ENCODE measurements at regions of chr12 and their contacts with region 1.

Region 1: GRCh38 chr12:47032644-47033043 is 46.8 kb upstream of the PCED1B start:
- DNase-seq: peak in 3 of 7 donors; percentile 20 to 41 (median 20)
- H3K4me3 ChIP-seq: no peak overlapping the region
- H3K27ac ChIP-seq: no peak overlapping the region
- H3K4me1 ChIP-seq: peaks cover 4 to 8% of the 10 kb centered on the region in 2 donors
- H3K27me3 ChIP-seq: no peaks in the 10 kb centered on the region
- CTCF ChIP-seq: peak; percentile 31 to 84 (median 69)
- POLR2A ChIP-seq: no peak

Region 2: GRCh38 chr12:46915082-46915481 is 117.6 kb before region 1 on chr12:
- intact Hi-C with region 1: no loop called
- DNase-seq: peak in 6 of 7 donors; percentile 28 to 71 (median 44)
- H3K4me3 ChIP-seq: no peak overlapping the region
- H3K27ac ChIP-seq: no peak overlapping the region
- H3K4me1 ChIP-seq: no peaks in the 10 kb centered on the region
- H3K27me3 ChIP-seq: no peaks in the 10 kb centered on the region
- CTCF ChIP-seq: no peak
- POLR2A ChIP-seq: no peak

Region 3: DNA sequence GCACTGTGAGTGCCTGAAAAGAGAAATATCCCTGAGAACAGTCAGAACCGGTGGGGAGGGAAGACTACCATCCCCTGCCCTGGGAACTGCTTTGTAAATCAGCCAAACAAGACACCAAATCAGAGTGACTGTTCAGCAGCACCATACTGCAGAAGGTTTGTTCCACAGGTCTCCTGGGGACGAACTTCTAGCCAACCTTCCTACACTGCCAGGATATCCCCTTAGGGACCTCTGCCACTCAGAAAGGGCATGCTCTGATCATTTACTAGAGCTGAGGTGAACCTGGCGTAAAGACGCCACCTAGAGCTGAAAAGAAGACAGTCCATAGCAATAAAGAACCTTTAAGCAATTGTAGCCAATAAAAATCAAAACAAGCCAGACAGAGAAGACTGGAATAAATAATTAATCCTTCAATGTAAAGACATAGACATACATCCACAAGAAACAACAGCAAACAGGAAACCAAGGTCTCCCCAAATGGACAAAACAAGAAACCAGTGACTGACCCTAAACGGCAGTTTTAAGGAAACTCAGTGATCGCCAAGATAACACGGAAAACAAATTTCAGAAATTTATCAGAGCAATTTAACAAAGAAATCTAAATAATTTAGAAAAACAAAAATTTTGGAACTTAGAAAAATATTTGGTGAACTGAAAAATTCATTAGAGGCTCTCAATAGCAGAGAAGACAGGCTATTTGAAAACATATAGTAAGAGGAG is 275.2 kb after region 1 on chr12:
- intact Hi-C with region 1: loop called (anchors 5 kb)
- DNase-seq: peak; percentile 31 to 74 (median 47)
- H3K4me3 ChIP-seq: no peak overlapping the region
- H3K27ac ChIP-seq: no peak overlapping the region
- H3K4me1 ChIP-seq: no peaks in the 10 kb centered on the region
- H3K27me3 ChIP-seq: no peaks in the 10 kb centered on the region
- CTCF ChIP-seq: peak; percentile 36 to 81 (median 70)
- POLR2A ChIP-seq: no peak

Region 4: DNA sequence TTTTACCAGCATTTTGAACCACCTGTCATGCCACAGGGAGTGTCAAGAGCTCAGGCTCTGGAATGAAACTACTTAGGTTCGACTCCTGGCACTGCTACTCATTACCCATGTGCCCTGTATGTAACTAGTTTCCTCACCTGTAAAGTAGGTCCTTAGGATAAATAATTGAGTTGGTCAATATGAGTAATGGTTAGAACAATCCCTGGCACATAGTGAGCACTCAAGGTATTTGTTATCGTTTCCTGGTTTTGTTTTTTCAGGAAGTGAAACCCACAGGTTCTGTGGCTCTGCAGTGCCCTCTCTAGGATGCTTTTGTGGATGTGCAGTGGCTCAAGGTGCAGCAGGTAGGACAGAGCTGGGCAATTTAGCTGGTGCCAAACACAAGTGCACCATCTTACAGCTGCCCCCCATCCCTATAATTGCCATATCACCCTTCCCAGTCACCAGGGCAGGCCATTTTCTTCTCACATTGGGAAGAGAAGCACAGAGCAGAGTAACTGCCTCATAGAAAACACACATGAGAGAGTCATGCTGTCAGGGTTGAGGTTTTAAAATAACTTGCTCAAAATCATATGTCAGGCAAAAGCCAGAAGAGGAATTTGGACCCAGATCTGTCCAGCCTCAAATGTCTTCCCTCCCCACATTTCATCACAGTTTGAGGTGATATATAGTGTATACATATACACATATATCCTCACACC is 375.7 kb after region 1 on chr12:
- intact Hi-C with region 1: loop called in 1 of 2 experiments (anchors 10 kb)
- DNase-seq: peak in 1 of 7 donors; percentile 8
- H3K4me3 ChIP-seq: no peak overlapping the region
- H3K27ac ChIP-seq: no peak overlapping the region
- H3K4me1 ChIP-seq: no peaks in the 10 kb centered on the region
- H3K27me3 ChIP-seq: no peaks in the 10 kb centered on the region
- CTCF ChIP-seq: peak in 4 of 6 experiments; percentile 4 to 33 (median 26)
- POLR2A ChIP-seq: no peak

Measured in adrenal gland (tissue), 19 donors.